Activated naive CD4-positive, alpha-beta T cell treated with anti-CD3 and anti-CD28 coated beads for 36 hours (primary cell): ENCODE measurements at regions of chr4 and their contacts with region 1.

Region 1: GRCh38 chr4:90419124-90419711 is 292.0 kb downstream of the CCSER1 start:
- DNase-seq: no peak
- H3K4me3 Mint-ChIP-seq: no peak overlapping the region
- H3K27ac Mint-ChIP-seq: no peak overlapping the region
- H3K4me1 Mint-ChIP-seq: no peaks in the 10 kb centered on the region
- H3K27me3 Mint-ChIP-seq: peaks cover 1% of the 10 kb centered on the region

Region 2: GRCh38 chr4:92163348-92163747 is 1744.1 kb after region 1 on chr4:
- CTCF ChIA-PET with region 1: no interaction called
- intact Hi-C with region 1: loop called (anchors 10 kb)
- DNase-seq: no peak
- H3K4me3 Mint-ChIP-seq: no peak overlapping the region
- H3K27ac Mint-ChIP-seq: no peak overlapping the region
- H3K4me1 Mint-ChIP-seq: no peaks in the 10 kb centered on the region
- H3K27me3 Mint-ChIP-seq: no peaks in the 10 kb centered on the region

Region 3: GRCh38 chr4:92387459-92388069 is 1968.3 kb after region 1 on chr4:
- CTCF ChIA-PET with region 1: no interaction called
- intact Hi-C with region 1: loop called (anchors 2 kb)
- DNase-seq: no peak
- H3K4me3 Mint-ChIP-seq: no peak overlapping the region
- H3K27ac Mint-ChIP-seq: no peak overlapping the region
- H3K4me1 Mint-ChIP-seq: no peaks in the 10 kb centered on the region
- H3K27me3 Mint-ChIP-seq: no peaks in the 10 kb centered on the region